OCI-LY7 (cell line): ENCODE measurements at regions of chr14 and their contacts with region 1.

Region 1: DNA sequence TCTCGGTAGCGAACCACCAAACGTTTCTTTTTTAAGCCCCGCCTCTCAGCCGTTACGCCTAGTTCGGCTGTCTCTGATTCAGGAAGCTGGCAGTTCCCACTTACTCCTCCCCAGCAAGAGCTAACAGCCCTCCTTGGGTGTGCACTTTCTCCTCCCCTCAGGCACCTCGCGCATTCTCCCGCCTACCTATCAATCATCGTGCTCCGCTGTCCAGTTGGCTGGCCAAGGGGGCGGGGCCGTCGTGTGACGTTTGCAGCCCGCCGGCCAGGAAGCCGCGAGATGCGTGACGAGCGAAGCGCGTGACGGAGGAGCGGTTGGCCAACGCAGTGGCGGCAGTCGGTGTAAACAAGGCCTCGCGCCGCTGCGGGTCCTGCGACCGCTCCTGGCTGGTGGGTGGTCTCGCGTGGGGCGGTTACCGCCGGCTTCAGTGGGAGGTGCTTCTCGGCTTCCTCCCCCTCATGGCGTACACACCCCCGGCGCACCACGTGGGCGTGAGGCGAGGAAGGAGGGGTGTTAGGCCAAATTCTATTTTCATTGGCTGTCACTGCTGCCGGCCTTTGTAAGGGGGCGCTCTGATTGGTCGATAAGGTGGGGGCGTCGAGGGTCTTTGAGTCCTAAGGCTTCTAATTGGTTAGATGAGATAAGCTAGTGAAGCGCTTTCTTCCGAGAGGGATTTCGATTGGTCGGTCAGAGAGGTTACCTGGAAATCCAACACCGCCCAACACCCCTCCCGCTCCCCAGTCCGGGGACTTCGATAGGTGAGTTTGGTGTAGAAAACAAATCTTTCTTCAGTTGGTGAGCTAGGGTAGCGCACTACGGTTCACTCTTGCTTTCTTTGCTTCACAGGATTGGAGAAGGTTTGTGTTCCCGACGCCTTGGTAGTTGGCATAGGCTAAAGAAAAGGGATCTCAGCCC is at the starts of genes DCAF11 and NRL:
- DNase-seq: peak; percentile 99
- H3K4me3 ChIP-seq: peak within 1 kb of the TSS; percentile 91
- H3K27ac ChIP-seq: peak within 1 kb of the TSS; percentile 93
- H3K4me1 ChIP-seq: peaks cover 15% of the 10 kb centered on the region
- CTCF ChIP-seq: no peak
- total RNA-seq, gene DCAF11: 75.5 and 79.2 TPM in 2 replicates
- total RNA-seq, gene NRL: 3.1 and 4.6 TPM in 2 replicates

Region 2: DNA sequence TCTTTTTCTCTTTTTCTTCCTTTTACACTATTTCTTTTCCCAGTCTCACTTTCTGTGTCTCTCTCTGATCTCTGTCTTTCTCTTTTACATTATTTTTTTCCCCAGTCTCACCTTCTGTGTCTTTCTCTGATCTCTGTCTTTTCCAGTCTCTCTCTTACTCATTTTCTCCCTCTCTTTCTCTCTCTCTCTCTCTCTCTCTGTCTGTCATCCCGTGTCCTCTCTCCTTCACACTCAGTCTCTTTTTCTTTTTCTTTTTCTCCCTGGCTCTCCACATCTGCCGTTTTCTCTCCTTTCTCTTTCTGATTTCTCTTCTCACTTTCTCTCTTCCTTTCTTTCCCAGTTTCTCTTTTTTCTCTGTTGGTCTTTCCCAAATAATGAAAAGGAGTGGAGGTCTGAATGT is 103.7 kb before region 1 on chr14:
- CTCF ChIA-PET with region 1: no interaction called
- POLR2A ChIA-PET with region 1: no interaction called
- intact Hi-C with region 1: no loop called
- DNase-seq: no peak
- H3K4me3 ChIP-seq: no peak overlapping the region
- H3K27ac ChIP-seq: no peak overlapping the region
- H3K4me1 ChIP-seq: peaks cover 16% of the 10 kb centered on the region
- CTCF ChIP-seq: no peak

Region 3: DNA sequence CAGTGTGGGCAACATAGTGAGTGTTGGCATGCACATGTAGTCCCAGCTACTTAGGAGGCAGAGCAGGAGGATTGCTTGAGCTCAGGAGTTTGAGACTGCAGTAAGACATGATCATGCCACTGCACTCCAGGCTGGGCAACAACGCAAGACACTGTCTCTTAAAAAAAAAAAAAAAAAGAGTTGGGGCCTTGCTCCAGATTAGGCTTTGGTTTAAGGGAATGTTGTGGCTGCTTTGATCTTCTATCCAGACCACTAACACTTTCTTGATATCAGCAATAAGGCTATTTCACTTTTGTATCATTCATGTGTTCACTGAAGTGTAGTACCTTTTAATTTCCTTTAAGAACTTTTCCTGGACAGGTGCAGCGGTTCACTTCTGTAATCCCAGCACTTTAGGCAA is 12.9 kb after region 1 on chr14:
- CTCF ChIA-PET with region 1: interaction called, 5 read pairs
- POLR2A ChIA-PET with region 1: interaction called, 11 read pairs
- intact Hi-C with region 1: no loop called
- DNase-seq: no peak
- H3K4me3 ChIP-seq: no peak overlapping the region
- H3K27ac ChIP-seq: no peak overlapping the region
- H3K4me1 ChIP-seq: peaks cover 20% of the 10 kb centered on the region
- CTCF ChIP-seq: no peak

Region 4: DNA sequence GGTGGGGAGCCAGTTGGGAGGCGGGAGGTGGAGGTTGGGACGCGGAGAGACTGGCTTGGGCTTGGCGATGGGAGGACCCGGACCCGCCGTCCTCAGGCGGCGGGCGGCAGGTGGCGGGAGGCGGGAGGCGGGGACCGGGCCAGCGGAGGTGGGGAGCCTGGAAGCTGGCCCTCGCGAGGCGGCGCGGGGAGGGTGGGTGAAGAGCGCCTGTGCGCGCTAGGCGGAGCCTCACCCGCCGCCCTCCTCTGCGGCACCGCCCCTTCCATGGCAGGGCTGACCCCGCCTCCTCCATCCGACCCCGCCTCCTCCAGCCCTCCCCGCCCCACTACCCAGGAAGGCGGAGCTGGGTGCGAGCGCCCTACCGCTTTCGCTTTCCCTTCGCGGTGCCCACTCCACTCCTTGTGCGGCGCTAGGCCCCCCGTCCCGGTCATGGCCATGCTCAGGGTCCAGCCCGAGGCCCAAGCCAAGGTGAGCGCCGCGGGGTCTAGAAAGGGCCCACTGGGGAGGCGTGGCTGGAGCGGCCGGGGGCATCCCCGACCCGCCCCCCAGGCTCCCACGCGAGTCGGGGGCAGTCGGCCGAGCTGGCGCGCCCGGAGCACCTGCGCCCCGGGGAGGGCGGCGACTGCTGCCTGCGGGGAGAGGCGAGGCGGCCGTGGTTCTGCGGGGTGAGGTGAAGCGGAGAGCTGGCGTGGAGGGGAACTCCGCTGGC is 21.2 kb after region 1 on chr14 and contains the start of gene PSME1:
- CTCF ChIA-PET with region 1: interaction called, 12 read pairs
- POLR2A ChIA-PET with region 1: interaction called, 43 read pairs
- intact Hi-C with region 1: loop called (anchors 1 kb)
- DNase-seq: peak; percentile 93
- H3K4me3 ChIP-seq: peak within 1 kb of the TSS; percentile 98
- H3K27ac ChIP-seq: peak within 1 kb of the TSS; percentile 46
- H3K4me1 ChIP-seq: peaks cover 40% of the 10 kb centered on the region
- CTCF ChIP-seq: no peak
- total RNA-seq, gene PSME1: 187 and 213 TPM in 2 replicates

Region 5: DNA sequence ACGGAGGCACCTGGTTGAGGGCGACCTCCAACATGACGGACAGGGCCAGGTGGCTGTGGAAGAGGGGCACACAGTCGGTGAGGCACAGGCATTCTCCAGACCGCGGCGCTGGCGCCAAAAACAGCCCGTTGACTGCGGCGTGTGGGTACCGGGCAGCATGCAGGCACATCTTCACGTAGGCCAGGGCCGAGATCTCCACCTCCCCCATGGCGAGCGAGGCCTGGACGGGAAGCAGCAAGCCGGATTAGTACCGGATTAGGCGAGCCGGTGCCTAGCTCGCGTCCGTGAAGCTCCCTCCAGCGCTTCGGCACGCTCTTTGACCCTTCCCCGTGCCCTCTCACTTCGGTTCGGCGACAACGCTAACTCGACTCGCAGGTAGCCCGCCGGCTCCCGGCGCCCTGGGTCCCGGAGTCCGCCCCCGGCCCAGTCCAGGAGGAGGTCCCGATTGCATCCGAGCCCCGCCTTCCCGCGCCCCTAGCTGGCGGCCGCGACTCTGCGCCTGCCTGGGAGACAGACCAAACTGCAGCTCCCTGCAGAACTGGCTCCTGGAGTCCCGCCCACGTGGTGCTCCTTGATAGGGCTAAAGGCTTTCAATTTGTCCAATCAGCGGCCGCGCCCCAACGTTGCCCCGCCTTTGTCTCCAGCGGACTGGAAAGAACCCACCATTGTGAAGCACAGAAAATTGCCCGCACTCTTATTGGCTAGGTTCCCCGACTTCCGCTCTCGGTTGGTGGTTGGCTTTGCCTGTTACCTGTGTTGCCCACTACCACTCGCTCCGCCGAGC is 26.5 kb after region 1 on chr14 and contains the start of gene EMC9:
- CTCF ChIA-PET with region 1: interaction called, 12 read pairs
- POLR2A ChIA-PET with region 1: interaction called, 43 read pairs
- intact Hi-C with region 1: loop called (anchors 1 kb)
- DNase-seq: peak; percentile 100
- H3K4me3 ChIP-seq: peak within 1 kb of the TSS; percentile 85
- H3K27ac ChIP-seq: peak within 1 kb of the TSS; percentile 81
- H3K4me1 ChIP-seq: peaks cover 44% of the 10 kb centered on the region
- CTCF ChIP-seq: peak; percentile 51
- total RNA-seq, gene EMC9: 73.2 and 74.8 TPM in 2 replicates

Region 6: DNA sequence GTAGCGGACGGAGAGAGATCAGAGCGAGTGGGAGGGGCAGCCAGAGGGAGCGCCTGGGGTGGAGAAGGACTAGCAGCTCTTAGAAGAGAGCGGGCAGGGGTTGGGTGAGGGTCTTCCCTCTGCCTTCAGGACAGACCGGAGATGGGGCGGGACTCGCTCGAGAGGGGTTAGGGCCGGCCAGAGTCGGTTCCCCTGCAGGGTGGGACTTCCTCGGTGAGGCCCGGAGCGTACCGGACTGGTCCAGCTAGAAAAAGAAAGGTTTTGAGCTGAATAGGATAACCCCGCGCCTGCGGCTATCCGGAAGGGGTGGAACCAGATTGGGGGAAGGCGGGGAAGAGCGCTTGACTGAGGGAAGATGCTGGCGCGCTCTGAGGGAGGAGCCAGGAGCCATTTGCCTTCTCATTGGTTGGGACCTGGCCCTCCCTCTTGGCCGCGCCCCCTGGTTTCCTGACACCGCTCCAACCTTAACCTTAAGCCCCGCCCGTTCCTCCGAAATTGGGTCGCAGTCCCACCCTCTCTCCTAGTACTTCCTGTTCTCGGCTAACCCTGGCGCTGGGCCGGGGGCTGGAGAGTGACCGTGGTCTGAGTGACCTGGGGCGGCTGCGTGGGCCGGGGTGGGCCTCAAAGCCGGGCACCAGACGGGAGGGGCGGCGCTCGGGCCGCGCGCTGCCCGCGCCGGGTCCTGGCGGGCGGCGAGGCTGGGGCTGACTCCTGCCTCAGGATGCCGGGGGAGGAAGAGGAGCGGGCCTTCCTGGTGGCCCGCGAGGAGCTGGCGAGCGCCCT is 32.4 kb after region 1 on chr14 and contains the start of gene RNF31:
- CTCF ChIA-PET with region 1: no interaction called
- POLR2A ChIA-PET with region 1: interaction called, 32 read pairs
- intact Hi-C with region 1: no loop called
- DNase-seq: peak; percentile 99
- H3K4me3 ChIP-seq: peak within 1 kb of the TSS; percentile 94
- H3K27ac ChIP-seq: peak within 1 kb of the TSS; percentile 82
- H3K4me1 ChIP-seq: peaks cover 20% of the 10 kb centered on the region
- CTCF ChIP-seq: no peak
- total RNA-seq, gene RNF31: 37.8 and 66.1 TPM in 2 replicates